HepG2 (cell line): ENCODE measurements at regions of chr17 and their contacts with region 1.

Region 1: GRCh38 chr17:41959336-41960095 is 7.1 kb upstream of the CNP start:
- DNase-seq: peak; percentile 85
- ATAC-seq: peak; percentile 87
- H3K4me3 ChIP-seq: peak overlapping the region; percentile 55 to 75 (median 57)
- H3K27ac ChIP-seq: peak overlapping the region; percentile 35
- H3K4me1 ChIP-seq: peaks cover 69% of the 10 kb centered on the region
- H3K27me3 ChIP-seq: peaks cover 3 to 25% of the 10 kb centered on the region in 2 experiments; a peak in 4 of 5 replicates
- CTCF ChIP-seq: peak; percentile 98
- EP300 ChIP-seq: no peak
- POLR2A ChIP-seq: peak; percentile 45 to 57; a peak in 3 of 4 replicates
- RAD21 ChIP-seq: peak; percentile 94

Region 2: DNA sequence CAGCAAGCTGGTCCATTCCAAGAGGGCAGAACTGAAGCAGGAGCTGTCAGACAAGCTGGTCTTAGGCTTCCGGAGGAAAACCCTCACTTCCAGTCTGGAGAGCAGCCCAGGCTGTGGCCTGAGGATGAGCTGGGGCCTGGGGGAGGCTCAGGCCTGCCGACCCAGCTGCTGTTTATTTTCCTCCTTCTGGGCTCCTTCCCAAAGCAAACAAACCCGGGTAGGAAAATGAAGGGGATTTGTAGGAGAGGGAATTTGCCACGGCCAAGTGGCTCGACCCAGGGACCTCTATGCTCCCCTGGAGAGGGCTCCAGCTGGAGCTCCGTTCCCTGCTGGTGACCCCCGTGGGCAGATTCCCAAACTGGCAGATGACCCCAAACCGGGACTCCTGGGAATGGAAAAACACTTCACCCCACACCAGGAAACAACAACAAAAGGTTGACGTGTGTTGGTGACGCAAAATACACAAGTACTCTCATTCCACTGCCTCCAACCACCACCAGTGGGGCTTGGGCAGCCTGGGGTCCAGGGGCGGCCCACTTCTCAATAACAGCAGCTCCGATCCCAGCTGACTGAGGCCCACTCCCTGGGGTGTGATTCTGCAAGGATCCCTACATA is 181.8 kb before region 1 on chr17:
- CTCF ChIA-PET with region 1: no interaction called
- POLR2A ChIA-PET with region 1: interaction called, 8 read pairs
- in situ Hi-C with region 1: no loop called
- intact Hi-C with region 1: loop called (anchors 1 kb)
- DNase-seq: peak; percentile 77
- ATAC-seq: peak; percentile 61
- H3K4me3 ChIP-seq: peak overlapping the region; percentile 24 to 60 (median 42)
- H3K27ac ChIP-seq: peak overlapping the region; percentile 75
- H3K4me1 ChIP-seq: peaks cover 60% of the 10 kb centered on the region
- H3K27me3 ChIP-seq: no peaks in the 10 kb centered on the region
- CTCF ChIP-seq: no peak
- EP300 ChIP-seq: peak in 1 of 2 experiments; percentile 55; a peak in 1 of 4 replicates
- POLR2A ChIP-seq: no peak
- RAD21 ChIP-seq: no peak

Region 3: DNA sequence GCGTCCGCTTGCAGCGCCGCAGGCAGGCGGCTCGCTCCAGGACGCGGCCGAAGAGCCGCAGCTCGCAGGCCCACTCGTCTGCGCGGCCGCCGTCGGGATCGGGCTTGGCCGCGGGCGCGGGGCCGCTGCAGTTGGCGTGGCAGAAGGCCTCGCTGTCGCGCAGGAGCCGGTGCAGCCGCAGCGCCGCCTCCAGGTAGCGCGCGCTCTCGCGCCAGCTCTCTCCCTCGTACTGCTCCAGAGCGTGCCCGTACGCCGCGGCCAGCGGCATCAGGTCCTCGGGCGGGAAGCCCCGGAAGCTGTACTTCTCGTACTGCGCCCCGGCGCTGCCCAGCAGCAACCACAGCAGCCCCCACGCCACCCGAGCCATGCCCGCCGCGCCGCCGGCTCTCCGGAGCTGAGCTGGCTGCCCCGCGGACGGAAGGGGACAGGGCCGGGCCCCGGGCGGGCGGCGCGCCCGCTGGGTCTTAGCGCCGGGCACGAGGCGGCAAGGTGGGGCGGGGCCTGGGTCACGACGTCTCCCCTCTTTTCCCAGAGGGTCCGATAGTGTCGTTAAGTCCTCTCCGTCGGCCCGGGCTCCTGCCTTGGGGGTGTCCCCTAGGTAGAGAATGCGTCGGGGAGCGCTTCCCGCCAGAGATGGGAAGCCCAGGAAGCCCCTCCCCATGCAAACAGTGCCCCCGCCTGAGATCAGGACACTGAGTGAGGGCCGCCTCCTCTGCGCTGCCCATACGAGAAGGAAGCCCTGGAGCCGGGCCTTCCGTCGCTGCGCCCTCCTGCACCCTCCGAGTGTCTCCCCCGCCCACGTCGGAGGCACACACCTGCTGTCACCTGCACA is 147.8 kb before region 1 on chr17 and contains the start of gene P3H4:
- CTCF ChIA-PET with region 1: no interaction called
- POLR2A ChIA-PET with region 1: interaction called, 10 read pairs
- in situ Hi-C with region 1: no loop called
- intact Hi-C with region 1: loop called (anchors 5 kb)
- DNase-seq: peak; percentile 60
- ATAC-seq: peak; percentile 80
- H3K4me3 ChIP-seq: peak within 1 kb of the TSS; percentile 83 to 88 (median 87)
- H3K27ac ChIP-seq: peak within 1 kb of the TSS; percentile 82
- H3K4me1 ChIP-seq: peaks cover 60% of the 10 kb centered on the region
- H3K27me3 ChIP-seq: no peaks in the 10 kb centered on the region; a peak in 1 of 5 replicates
- CTCF ChIP-seq: peak; percentile 87
- EP300 ChIP-seq: peak; percentile 15 to 41; a peak in 1 of 4 replicates
- POLR2A ChIP-seq: peak; percentile 43 to 48; a peak in 2 of 4 replicates
- RAD21 ChIP-seq: peak; percentile 93
- total RNA-seq, gene P3H4: 13.5 and 37.1 TPM in 2 replicates

Region 4: GRCh38 chr17:41910701-41911391 is 48.7 kb before region 1 on chr17:
- CTCF ChIA-PET with region 1: no interaction called
- POLR2A ChIA-PET with region 1: interaction called, 14 read pairs
- in situ Hi-C with region 1: no loop called
- intact Hi-C with region 1: loop called (anchors 5 kb)
- DNase-seq: no peak
- ATAC-seq: no peak
- H3K4me3 ChIP-seq: no peak overlapping the region
- H3K27ac ChIP-seq: no peak overlapping the region
- H3K4me1 ChIP-seq: peaks cover 71% of the 10 kb centered on the region
- H3K27me3 ChIP-seq: no peaks in the 10 kb centered on the region
- CTCF ChIP-seq: no peak
- EP300 ChIP-seq: no peak
- POLR2A ChIP-seq: no peak
- RAD21 ChIP-seq: no peak

Region 5: GRCh38 chr17:41930009-41930832 is 29.3 kb before region 1 on chr17 and contains the start of gene ODAD4:
- CTCF ChIA-PET with region 1: interaction called, 11 read pairs
- POLR2A ChIA-PET with region 1: interaction called, 62 read pairs
- in situ Hi-C with region 1: no loop called
- intact Hi-C with region 1: loop called (anchors 1 kb)
- DNase-seq: peak; percentile 95
- ATAC-seq: peak; percentile 99
- H3K4me3 ChIP-seq: peak within 1 kb of the TSS; percentile 51 to 76 (median 70)
- H3K27ac ChIP-seq: peak within 1 kb of the TSS; percentile 62
- H3K4me1 ChIP-seq: peaks cover 42% of the 10 kb centered on the region
- H3K27me3 ChIP-seq: no peaks in the 10 kb centered on the region
- CTCF ChIP-seq: peak; percentile 85
- EP300 ChIP-seq: peak in 1 of 2 experiments; percentile 62; a peak in 1 of 4 replicates
- POLR2A ChIP-seq: peak; percentile 73 to 94
- RAD21 ChIP-seq: peak; percentile 90
- total RNA-seq, gene ODAD4: 0.53 and 0.60 TPM in 2 replicates

Region 6: DNA sequence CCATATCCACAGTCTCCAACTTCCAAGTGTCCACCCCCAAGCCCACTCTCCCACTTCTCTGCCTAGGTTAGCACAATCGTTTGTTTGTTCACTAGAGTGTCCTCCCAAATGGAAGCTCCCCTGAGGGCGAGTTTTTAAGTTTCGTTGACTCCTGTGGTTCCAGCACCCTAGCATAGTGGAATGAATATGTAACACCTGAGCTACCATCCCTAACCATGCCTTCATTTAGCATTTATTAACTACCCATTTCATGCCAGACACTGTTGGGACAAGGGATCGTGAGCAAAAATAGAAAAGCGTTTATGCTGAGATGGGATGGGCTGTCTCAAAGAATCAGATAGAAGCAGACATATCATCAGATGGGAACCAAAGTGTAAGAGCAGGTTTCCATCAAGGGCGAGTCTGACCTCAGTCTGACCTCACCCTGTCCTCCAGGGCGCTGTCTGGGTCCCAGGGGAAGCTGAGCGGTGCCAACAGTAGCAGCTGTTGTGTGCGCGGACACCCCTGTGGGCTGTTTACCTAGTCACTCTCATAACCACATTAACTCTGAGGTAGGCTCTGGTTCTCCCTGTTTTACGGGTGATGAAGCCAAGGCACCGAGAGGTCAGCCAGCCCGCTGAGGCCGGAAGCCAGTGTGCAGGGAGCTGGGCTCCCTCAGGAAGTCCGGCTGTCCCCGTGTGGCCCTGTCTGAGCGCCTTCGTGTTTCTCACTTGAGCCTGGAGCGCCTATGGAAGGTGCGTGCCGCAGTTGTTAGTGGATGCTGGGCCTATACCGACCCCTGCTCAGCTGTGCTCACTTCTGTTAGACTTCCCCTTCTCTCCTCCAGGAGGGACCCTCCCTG is 13.3 kb after region 1 on chr17:
- CTCF ChIA-PET with region 1: no interaction called
- POLR2A ChIA-PET with region 1: interaction called, 14 read pairs
- in situ Hi-C with region 1: no loop called
- intact Hi-C with region 1: no loop called
- DNase-seq: no peak
- ATAC-seq: peak; percentile 2
- H3K4me3 ChIP-seq: no peak overlapping the region
- H3K27ac ChIP-seq: no peak overlapping the region
- H3K4me1 ChIP-seq: peaks cover 38% of the 10 kb centered on the region
- H3K27me3 ChIP-seq: no peaks in the 10 kb centered on the region
- CTCF ChIP-seq: no peak
- EP300 ChIP-seq: no peak
- POLR2A ChIP-seq: peak; percentile 18 to 41; a peak in 2 of 4 replicates
- RAD21 ChIP-seq: no peak

Region 7: GRCh38 chr17:42027961-42028790 is 68.7 kb after region 1 on chr17:
- CTCF ChIA-PET with region 1: interaction called, 26 read pairs
- POLR2A ChIA-PET with region 1: interaction called, 15 read pairs
- in situ Hi-C with region 1: no loop called
- intact Hi-C with region 1: loop called (anchors 1 kb)
- DNase-seq: peak; percentile 79
- ATAC-seq: peak; percentile 88
- H3K4me3 ChIP-seq: peak overlapping the region in 2 of 3 experiments; percentile 8 to 63; a peak in 4 of 6 replicates
- H3K27ac ChIP-seq: no peak overlapping the region
- H3K4me1 ChIP-seq: peaks cover 61% of the 10 kb centered on the region
- H3K27me3 ChIP-seq: no peaks in the 10 kb centered on the region
- CTCF ChIP-seq: peak; percentile 93
- EP300 ChIP-seq: no peak
- POLR2A ChIP-seq: peak in 1 of 2 experiments; percentile 45; a peak in 1 of 4 replicates
- RAD21 ChIP-seq: peak; percentile 56

Region 8: DNA sequence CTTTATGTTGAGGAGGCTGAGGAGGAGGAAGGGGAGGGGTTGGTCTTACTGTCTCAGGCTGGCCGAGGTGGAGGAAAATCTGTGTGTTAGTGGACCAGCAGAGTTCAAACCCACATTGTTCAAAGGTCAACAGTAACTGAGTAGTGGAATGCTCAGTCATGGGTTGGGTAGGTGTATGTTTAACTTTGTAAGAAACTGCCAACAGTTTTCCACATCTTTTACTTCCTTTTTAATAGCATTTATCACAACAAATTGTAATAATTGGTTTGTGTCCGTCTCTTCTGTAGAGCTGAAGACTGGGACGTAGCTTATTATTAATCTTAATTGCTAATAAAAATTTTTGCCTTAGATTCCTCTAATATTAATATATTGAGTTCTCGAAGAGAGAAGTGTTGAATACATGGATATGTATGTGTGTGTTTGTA is 504.5 kb after region 1 on chr17:
- CTCF ChIA-PET with region 1: no interaction called
- POLR2A ChIA-PET with region 1: no interaction called
- in situ Hi-C with region 1: no loop called
- intact Hi-C with region 1: no loop called
- DNase-seq: peak; percentile 84
- ATAC-seq: peak; percentile 76
- H3K4me3 ChIP-seq: peak overlapping the region in 1 of 3 experiments; percentile 17; a peak in 1 of 6 replicates
- H3K27ac ChIP-seq: peak overlapping the region; percentile 47
- H3K4me1 ChIP-seq: peaks cover 89% of the 10 kb centered on the region
- H3K27me3 ChIP-seq: no peaks in the 10 kb centered on the region; a peak in 1 of 5 replicates
- CTCF ChIP-seq: no peak
- EP300 ChIP-seq: peak in 1 of 2 experiments; percentile 57; a peak in 1 of 4 replicates
- POLR2A ChIP-seq: no peak
- RAD21 ChIP-seq: no peak